Endothelial cell of umbilical vein (primary cell): ENCODE measurements at regions of chr7 and their contacts with region 1.

Region 1: DNA sequence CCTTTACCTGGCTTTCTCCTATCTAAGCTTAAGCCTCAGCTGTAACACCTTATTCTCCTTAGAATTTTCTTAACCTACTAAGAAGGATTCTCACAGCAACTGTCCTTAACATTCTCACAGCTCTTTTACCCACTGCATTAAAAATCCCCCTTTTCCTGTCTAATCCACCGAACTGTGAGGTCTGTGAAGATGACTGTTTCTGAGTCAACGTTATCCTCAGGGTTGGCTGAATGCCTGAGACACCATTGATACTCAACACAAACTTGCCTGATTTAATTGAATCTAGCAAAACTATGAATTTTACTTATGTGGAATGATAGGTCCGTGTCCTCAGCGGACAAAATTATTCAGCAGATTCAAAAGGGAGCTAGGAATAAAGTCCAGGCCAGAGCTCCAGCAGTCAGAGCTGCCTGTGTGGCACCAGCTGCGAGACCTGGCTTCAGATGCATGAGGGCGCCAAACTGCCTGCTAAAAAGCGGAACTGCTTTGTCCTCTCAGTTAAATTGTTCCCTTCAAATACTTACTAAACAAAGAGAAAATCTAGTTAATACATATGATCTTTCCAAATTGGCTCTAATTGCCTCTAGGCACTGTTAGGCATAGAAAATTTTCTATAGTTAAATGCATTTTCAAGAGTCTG is 33.4 kb upstream of the VWDE start:
- DNase-seq: no peak
- H3K4me3 ChIP-seq: no peak overlapping the region
- H3K27ac ChIP-seq: no peak overlapping the region
- H3K4me1 ChIP-seq: no peaks in the 10 kb centered on the region
- H3K27me3 ChIP-seq: peaks cover 6 to 8% of the 10 kb centered on the region in 2 experiments
- CTCF ChIP-seq: no peak
- POLR2A ChIP-seq: no peak

Region 2: GRCh38 chr7:12111422-12112405 is 325.3 kb before region 1 on chr7:
- CTCF ChIA-PET with region 1: no interaction called
- POLR2A ChIA-PET with region 1: no interaction called
- dilution Hi-C with region 1: no loop called
- intact Hi-C with region 1: no loop called
- DNase-seq: peak; percentile 38
- H3K4me3 ChIP-seq: peak overlapping the region in 2 of 3 experiments; percentile 18 to 28
- H3K27ac ChIP-seq: no peak overlapping the region
- H3K4me1 ChIP-seq: no peaks in the 10 kb centered on the region
- H3K27me3 ChIP-seq: peaks cover 6 to 19% of the 10 kb centered on the region in 2 experiments
- CTCF ChIP-seq: no peak
- POLR2A ChIP-seq: no peak

Region 3: GRCh38 chr7:12389089-12389700 is 47.8 kb before region 1 on chr7:
- CTCF ChIA-PET with region 1: interaction called, 12 read pairs
- POLR2A ChIA-PET with region 1: no interaction called
- dilution Hi-C with region 1: no loop called
- intact Hi-C with region 1: no loop called
- DNase-seq: peak; percentile 59
- H3K4me3 ChIP-seq: no peak overlapping the region
- H3K27ac ChIP-seq: no peak overlapping the region
- H3K4me1 ChIP-seq: no peaks in the 10 kb centered on the region
- H3K27me3 ChIP-seq: no peaks in the 10 kb centered on the region
- CTCF ChIP-seq: peak; percentile 79
- POLR2A ChIP-seq: no peak

Region 4: GRCh38 chr7:12423355-12423994 is 13.5 kb before region 1 on chr7:
- CTCF ChIA-PET with region 1: interaction called, 18 read pairs
- POLR2A ChIA-PET with region 1: no interaction called
- dilution Hi-C with region 1: no loop called
- intact Hi-C with region 1: no loop called
- DNase-seq: peak; percentile 47
- H3K4me3 ChIP-seq: no peak overlapping the region
- H3K27ac ChIP-seq: peak overlapping the region; percentile 75
- H3K4me1 ChIP-seq: peaks cover 15% of the 10 kb centered on the region
- H3K27me3 ChIP-seq: no peaks in the 10 kb centered on the region
- CTCF ChIP-seq: no peak
- POLR2A ChIP-seq: no peak

Region 5: GRCh38 chr7:12450615-12451014 is 13.6 kb after region 1 on chr7:
- CTCF ChIA-PET with region 1: interaction called, 15 read pairs
- POLR2A ChIA-PET with region 1: no interaction called
- dilution Hi-C with region 1: no loop called
- intact Hi-C with region 1: no loop called
- DNase-seq: no peak
- H3K4me3 ChIP-seq: no peak overlapping the region
- H3K27ac ChIP-seq: no peak overlapping the region
- H3K4me1 ChIP-seq: no peaks in the 10 kb centered on the region
- H3K27me3 ChIP-seq: peaks cover 0 to 5% of the 10 kb centered on the region in 2 experiments
- CTCF ChIP-seq: no peak
- POLR2A ChIP-seq: no peak